ENCODE measurements at regions of chr5 and their contacts with region 1.

Region 1: DNA sequence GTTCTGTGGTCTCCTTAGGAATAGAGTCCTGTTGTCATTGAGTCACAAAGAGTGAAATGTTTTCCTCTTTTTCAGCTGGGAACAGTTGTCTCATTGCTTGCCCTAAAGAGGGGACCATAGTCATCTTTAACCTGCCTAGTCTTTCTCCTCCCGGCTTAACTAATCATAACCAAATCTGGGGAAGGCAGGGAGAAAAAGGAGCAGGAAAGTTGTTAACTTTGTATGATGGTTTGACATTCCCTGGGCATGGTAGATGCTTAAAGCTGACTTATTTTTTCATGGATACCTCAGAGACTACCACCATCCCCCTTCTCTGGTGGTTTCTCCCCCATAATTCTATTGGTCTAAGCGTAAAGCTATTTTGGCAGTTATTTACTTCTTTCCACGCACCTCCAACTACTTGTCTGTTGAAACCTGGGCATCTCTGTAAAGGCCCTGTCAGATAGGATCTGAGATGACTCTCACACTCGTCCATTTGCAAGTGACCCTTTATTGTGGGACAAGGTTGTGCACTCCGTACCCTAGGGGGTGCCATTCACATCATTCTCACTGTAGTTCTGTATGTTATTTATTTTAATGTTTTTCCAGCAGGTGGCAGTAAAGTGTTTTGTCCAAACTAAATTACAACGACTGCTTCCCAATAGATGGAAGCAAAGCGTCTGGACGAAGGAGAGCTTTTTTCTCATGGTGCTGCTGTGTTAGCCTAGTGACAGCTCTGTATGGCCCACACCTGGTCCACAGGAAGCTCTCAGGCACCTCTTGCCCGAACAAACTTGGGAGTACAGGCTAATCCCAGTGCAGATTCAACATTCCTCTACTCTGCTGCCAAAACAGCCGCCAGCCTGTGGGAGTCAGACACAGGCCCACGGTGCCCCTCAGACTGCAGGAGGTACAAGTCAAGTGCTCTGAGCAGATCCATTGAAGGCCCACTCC is 3.0 kb upstream of the FAM13B start:
- H3K4me3 ChIP-seq: no peak overlapping the region
- H3K27ac ChIP-seq: no peak overlapping the region
- H3K4me1 ChIP-seq: no peaks in the 10 kb centered on the region
- CTCF ChIP-seq: peak; percentile 90

Region 2: DNA sequence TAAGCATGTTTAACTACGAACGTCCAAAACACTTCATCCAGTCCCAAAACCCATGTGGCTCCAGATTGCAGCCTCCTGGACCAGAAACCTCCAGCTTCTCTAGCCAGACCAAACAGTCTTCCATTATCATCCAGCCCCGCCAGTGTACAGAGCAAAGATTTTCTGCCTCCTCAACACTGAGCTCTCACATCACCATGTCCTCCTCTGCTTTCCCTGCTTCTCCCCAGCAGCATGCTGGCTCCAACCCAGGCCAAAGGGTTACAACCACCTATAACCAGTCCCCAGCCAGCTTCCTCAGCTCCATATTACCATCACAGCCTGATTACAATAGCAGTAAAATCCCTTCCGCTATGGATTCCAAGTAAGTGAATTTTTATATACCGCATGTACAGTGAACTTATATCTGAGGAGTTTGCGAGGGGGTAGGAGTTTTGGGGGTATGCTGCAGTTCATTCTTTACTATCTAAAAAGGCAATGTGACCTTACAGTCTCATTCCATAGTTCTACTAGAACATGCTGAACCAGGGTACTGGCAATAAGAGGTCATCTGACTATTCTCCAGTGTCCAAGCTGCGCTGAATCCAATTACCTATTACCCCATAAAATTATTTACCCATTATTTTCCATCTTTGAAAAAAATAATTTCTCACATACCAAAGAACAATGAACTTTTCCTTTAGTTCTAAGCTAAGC is 165.1 kb before region 1 on chr5:
- CTCF ChIA-PET with region 1: no interaction called
- POLR2A ChIA-PET with region 1: no interaction called
- H3K4me3 ChIP-seq: no peak overlapping the region
- H3K27ac ChIP-seq: no peak overlapping the region
- H3K4me1 ChIP-seq: no peaks in the 10 kb centered on the region
- CTCF ChIP-seq: no peak

Region 3: GRCh38 chr5:137945825-137946224 is 90.0 kb before region 1 on chr5:
- CTCF ChIA-PET with region 1: no interaction called
- POLR2A ChIA-PET with region 1: no interaction called
- H3K4me3 ChIP-seq: no peak overlapping the region
- H3K27ac ChIP-seq: no peak overlapping the region
- H3K4me1 ChIP-seq: no peaks in the 10 kb centered on the region
- CTCF ChIP-seq: no peak

Region 4: GRCh38 chr5:138015916-138016315 is 20.0 kb before region 1 on chr5:
- CTCF ChIA-PET with region 1: interaction called, 11 read pairs
- POLR2A ChIA-PET with region 1: no interaction called
- H3K4me3 ChIP-seq: no peak overlapping the region
- H3K27ac ChIP-seq: no peak overlapping the region
- H3K4me1 ChIP-seq: no peaks in the 10 kb centered on the region
- CTCF ChIP-seq: no peak

Region 5: GRCh38 chr5:138054847-138055558 is 19.1 kb after region 1 on chr5:
- CTCF ChIA-PET with region 1: interaction called, 35 read pairs
- POLR2A ChIA-PET with region 1: no interaction called
- H3K4me3 ChIP-seq: no peak overlapping the region
- H3K27ac ChIP-seq: no peak overlapping the region
- H3K4me1 ChIP-seq: no peaks in the 10 kb centered on the region
- CTCF ChIP-seq: no peak

Region 6: GRCh38 chr5:138331449-138332368 is 295.8 kb after region 1 on chr5 and contains the start of gene CDC25C:
- CTCF ChIA-PET with region 1: no interaction called
- POLR2A ChIA-PET with region 1: no interaction called
- H3K4me3 ChIP-seq: peak within 1 kb of the TSS; percentile 78
- H3K27ac ChIP-seq: peak within 1 kb of the TSS; percentile 75
- H3K4me1 ChIP-seq: peaks cover 4% of the 10 kb centered on the region; the same call in 1 of the 2 replicates
- CTCF ChIP-seq: no peak

Measured in HEK293 (cell line).